ENCODE measurements at regions of chr6 and their contacts with region 1.

Region 1: DNA sequence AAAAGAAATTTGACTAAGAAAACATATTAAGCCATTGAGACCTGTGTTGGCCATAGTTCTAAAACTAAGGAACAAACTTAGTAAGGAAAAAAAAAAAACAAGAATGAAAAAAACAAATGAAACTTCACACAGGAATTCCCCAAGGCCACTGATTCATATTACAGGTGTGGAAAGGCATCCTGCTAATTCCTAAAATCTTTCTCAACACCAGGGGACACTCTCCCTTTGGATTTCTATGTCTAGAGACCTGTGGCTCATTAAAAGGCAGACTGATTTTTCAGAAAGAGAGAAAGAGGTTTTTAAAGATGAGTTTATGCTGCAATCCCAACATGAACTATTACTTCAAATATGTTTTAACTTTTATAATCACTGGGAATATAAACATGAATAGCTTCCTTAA is at the start of gene OR12D1:
- DNase-seq: no peak
- H3K4me3 ChIP-seq: no peak within 1 kb of the TSS
- H3K27ac ChIP-seq: no peak within 1 kb of the TSS
- H3K4me1 ChIP-seq: no peaks in the 10 kb centered on the region
- H3K27me3 ChIP-seq: no peaks in the 10 kb centered on the region
- CTCF ChIP-seq: peak in 2 of 3 experiments; percentile 49 to 51; a peak in 2 of 4 replicates
- EP300 ChIP-seq: no peak
- POLR2A ChIP-seq: no peak
- RAD21 ChIP-seq: peak; percentile 67 to 75
- total RNA-seq, gene OR12D1: not detected in 2 replicates

Region 2: GRCh38 chr6:29368765-29369164 is 45.8 kb before region 1 on chr6 and contains the start of gene OR5V1:
- CTCF ChIA-PET with region 1: no interaction called
- POLR2A ChIA-PET with region 1: no interaction called
- DNase-seq: no peak
- H3K4me3 ChIP-seq: no peak within 1 kb of the TSS
- H3K27ac ChIP-seq: no peak within 1 kb of the TSS
- H3K4me1 ChIP-seq: no peaks in the 10 kb centered on the region
- H3K27me3 ChIP-seq: no peaks in the 10 kb centered on the region
- CTCF ChIP-seq: no peak
- EP300 ChIP-seq: no peak
- POLR2A ChIP-seq: no peak
- RAD21 ChIP-seq: no peak
- total RNA-seq, gene OR5V1: not detected in 2 replicates

Region 3: DNA sequence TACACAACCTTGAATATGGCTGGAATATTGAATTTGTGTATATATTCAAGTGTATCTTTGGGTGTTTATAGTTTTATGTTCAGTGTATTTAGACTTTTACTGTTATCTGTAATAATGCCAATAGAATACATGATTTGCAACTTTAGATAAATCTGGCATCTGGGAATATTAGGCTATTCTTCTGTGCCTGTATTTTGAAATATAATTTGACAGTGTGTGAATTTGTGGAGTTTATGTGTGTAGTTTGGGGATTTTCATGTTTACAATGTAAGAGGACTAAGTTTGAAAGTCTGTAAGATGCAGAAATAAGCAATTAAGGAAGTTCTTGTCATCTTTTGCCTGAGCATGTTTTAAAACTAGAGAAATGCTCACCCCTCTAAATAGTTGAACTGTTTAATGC is 24.4 kb after region 1 on chr6 and contains the start of gene OR10C1:
- CTCF ChIA-PET with region 1: interaction called, 10 read pairs
- POLR2A ChIA-PET with region 1: no interaction called
- DNase-seq: no peak
- H3K4me3 ChIP-seq: no peak within 1 kb of the TSS
- H3K27ac ChIP-seq: no peak within 1 kb of the TSS
- H3K4me1 ChIP-seq: peaks cover 0 to 2% (median 0%) of the 10 kb centered on the region in 4 experiments; a peak in 1 of 7 replicates
- H3K27me3 ChIP-seq: no peaks in the 10 kb centered on the region
- CTCF ChIP-seq: no peak
- EP300 ChIP-seq: no peak
- POLR2A ChIP-seq: no peak
- RAD21 ChIP-seq: no peak
- total RNA-seq, gene OR10C1: not detected in 2 replicates

Measured in H1 (cell line).